OCI-LY7 (cell line): ENCODE measurements at regions of chr9 and their contacts with region 1.

Region 1: DNA sequence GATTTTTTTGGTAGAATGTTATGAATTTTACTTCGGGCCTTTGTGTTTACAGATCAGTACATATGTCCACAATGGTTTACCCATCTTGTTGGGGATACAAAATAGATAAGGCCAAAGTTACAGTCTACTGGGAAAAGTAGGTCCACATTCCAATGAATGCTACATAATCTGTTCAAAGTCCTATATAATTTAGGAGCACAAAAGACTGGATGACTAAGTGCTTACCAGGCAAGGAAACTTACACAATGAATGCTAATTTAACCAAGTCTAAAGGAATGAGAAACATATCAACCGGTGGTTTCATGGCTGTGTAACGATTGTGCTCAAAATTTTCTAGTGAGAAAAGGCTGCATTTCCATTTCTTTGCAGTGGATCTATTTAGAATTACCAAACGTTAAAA is 97.4 kb upstream of the TRPM3 start:
- DNase-seq: no peak
- H3K4me3 ChIP-seq: no peak overlapping the region
- H3K27ac ChIP-seq: no peak overlapping the region
- H3K4me1 ChIP-seq: no peaks in the 10 kb centered on the region
- CTCF ChIP-seq: no peak

Region 2: GRCh38 chr9:71025201-71025600 is 193.6 kb before region 1 on chr9:
- CTCF ChIA-PET with region 1: no interaction called
- POLR2A ChIA-PET with region 1: no interaction called
- intact Hi-C with region 1: no loop called
- DNase-seq: no peak
- H3K4me3 ChIP-seq: no peak overlapping the region
- H3K27ac ChIP-seq: no peak overlapping the region
- H3K4me1 ChIP-seq: no peaks in the 10 kb centered on the region
- CTCF ChIP-seq: no peak

Region 3: DNA sequence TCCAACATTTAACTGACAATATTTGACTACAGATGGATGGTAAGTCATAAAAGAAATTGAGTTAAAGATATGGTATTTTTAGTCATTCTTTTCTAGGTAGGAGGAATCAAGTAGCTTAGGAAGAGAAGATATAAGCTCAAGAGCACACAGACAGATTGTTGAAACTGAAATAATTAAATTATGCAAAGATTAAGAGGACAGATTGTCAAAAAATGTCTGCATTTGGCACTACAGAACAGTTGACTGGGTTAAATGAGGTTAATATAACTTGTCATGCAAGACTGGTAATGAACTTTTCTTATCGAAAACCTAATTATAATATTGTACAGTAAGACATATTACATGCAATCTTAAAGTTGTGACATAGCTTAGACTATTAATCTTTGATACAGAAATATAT is 61.0 kb before region 1 on chr9:
- CTCF ChIA-PET with region 1: no interaction called
- POLR2A ChIA-PET with region 1: no interaction called
- intact Hi-C with region 1: loop called (anchors 10 kb)
- DNase-seq: no peak
- H3K4me3 ChIP-seq: no peak overlapping the region
- H3K27ac ChIP-seq: no peak overlapping the region
- H3K4me1 ChIP-seq: no peaks in the 10 kb centered on the region
- CTCF ChIP-seq: no peak